ENCODE measurements at regions of chr13 and their contacts with region 1.

Region 1: GRCh38 chr13:76903544-76904162 is 17.4 kb upstream of the KCTD12 start:
- DNase-seq: peak; percentile 39
- H3K4me3 Mint-ChIP-seq: no peak overlapping the region
- H3K27ac Mint-ChIP-seq: no peak overlapping the region
- H3K4me1 Mint-ChIP-seq: no peaks in the 10 kb centered on the region
- H3K27me3 Mint-ChIP-seq: no peaks in the 10 kb centered on the region
- CTCF ChIP-seq: peak; percentile 41

Region 2: GRCh38 chr13:75687150-75687763 is 1216.4 kb before region 1 on chr13:
- CTCF ChIA-PET with region 1: no interaction called
- intact Hi-C with region 1: loop called (anchors 5 kb)
- DNase-seq: no peak
- H3K4me3 Mint-ChIP-seq: no peak overlapping the region
- H3K27ac Mint-ChIP-seq: no peak overlapping the region
- H3K4me1 Mint-ChIP-seq: peaks cover 11% of the 10 kb centered on the region
- H3K27me3 Mint-ChIP-seq: no peaks in the 10 kb centered on the region
- CTCF ChIP-seq: no peak

Region 3: GRCh38 chr13:75876360-75877050 is 1027.1 kb before region 1 on chr13:
- CTCF ChIA-PET with region 1: no interaction called
- intact Hi-C with region 1: loop called (anchors 5 kb)
- DNase-seq: peak; percentile 17
- H3K4me3 Mint-ChIP-seq: no peak overlapping the region
- H3K27ac Mint-ChIP-seq: no peak overlapping the region
- H3K4me1 Mint-ChIP-seq: peaks cover 7% of the 10 kb centered on the region
- H3K27me3 Mint-ChIP-seq: no peaks in the 10 kb centered on the region
- CTCF ChIP-seq: no peak

Region 4: DNA sequence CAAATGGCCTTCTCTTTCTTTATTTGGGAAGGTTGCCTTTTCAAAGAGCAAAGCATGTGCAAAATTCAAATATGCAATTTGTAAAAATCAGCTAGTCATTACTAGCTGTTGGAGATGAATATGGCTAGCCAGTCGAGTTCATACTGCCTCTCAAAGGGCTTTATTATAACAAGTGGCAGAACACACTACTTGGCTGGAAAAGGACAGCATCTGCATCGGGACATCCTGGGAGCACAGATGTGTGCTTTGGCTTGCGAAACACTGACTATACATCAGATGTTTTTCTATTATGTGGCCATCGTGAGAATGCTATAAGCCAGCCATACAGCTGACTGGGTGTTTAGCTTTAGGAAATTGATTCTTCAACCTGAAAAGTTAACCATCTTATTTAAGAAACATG is 441.7 kb before region 1 on chr13:
- CTCF ChIA-PET with region 1: no interaction called
- intact Hi-C with region 1: no loop called
- DNase-seq: no peak
- H3K4me3 Mint-ChIP-seq: no peak overlapping the region
- H3K27ac Mint-ChIP-seq: no peak overlapping the region
- H3K4me1 Mint-ChIP-seq: no peaks in the 10 kb centered on the region
- H3K27me3 Mint-ChIP-seq: no peaks in the 10 kb centered on the region
- CTCF ChIP-seq: no peak

Region 5: DNA sequence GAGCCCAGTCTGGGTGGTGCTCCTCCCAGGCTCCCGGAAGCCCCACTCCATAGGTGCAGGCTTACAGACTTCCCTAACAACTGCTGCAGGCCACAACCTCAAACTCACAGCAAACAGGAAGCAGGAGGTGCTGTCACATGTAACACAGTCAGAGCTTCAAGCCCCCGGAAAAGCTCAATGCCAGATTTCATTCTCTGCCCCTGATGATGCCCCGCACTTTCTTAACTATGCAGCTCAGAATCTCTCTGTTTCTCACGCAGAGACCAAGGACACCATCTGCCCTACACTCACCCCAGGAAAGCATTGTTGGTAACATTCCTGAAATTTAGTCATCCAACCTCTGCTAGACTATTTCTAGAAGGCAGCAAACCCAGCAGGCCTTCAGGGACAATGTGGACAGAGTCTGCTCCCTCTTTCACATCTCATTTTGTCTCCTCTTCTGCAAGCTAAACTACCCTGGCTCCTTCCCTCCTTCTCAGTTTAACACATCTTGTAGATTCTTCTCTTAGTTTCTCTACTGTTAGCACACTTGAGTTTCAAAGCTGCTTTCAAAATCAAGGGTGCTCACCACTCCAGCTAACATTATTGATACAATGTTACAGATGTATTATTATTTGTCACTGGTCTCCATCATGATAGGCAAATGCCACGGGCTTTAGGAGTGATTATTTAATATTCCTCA is 180.0 kb before region 1 on chr13:
- CTCF ChIA-PET with region 1: no interaction called
- intact Hi-C with region 1: no loop called
- DNase-seq: no peak
- H3K4me3 Mint-ChIP-seq: no peak overlapping the region
- H3K27ac Mint-ChIP-seq: no peak overlapping the region
- H3K4me1 Mint-ChIP-seq: no peaks in the 10 kb centered on the region
- H3K27me3 Mint-ChIP-seq: no peaks in the 10 kb centered on the region
- CTCF ChIP-seq: no peak

Region 6: DNA sequence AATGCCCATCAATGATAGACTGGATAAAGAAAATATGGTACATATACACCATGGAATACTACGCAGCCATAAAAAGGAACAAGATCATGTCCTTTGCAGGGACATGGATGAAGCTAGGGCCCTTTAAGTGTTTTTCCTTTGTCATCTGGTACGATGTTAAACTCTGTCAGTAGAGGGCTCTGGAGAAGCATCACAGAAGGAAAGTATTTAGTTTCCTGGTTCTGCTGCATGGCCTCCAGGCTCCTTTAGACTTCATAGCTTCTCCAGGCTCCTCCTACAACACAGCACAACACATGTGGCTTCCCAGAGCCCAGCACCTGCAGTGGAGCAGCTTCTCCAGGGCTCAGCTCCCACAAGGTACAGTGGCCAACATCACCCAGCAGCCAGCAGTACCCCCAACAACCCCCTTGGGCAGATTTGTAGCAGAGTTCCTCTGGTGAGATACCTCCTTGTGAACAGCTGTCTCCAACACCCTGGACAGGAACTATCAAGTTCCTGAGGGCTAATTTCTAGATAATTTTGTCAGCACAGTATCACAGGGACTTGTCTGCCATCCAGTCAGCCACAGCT is 80.9 kb before region 1 on chr13:
- CTCF ChIA-PET with region 1: no interaction called
- intact Hi-C with region 1: loop called (anchors 10 kb)
- DNase-seq: no peak
- H3K4me3 Mint-ChIP-seq: no peak overlapping the region
- H3K27ac Mint-ChIP-seq: no peak overlapping the region
- H3K4me1 Mint-ChIP-seq: no peaks in the 10 kb centered on the region
- H3K27me3 Mint-ChIP-seq: peaks cover 11% of the 10 kb centered on the region
- CTCF ChIP-seq: no peak

Region 7: DNA sequence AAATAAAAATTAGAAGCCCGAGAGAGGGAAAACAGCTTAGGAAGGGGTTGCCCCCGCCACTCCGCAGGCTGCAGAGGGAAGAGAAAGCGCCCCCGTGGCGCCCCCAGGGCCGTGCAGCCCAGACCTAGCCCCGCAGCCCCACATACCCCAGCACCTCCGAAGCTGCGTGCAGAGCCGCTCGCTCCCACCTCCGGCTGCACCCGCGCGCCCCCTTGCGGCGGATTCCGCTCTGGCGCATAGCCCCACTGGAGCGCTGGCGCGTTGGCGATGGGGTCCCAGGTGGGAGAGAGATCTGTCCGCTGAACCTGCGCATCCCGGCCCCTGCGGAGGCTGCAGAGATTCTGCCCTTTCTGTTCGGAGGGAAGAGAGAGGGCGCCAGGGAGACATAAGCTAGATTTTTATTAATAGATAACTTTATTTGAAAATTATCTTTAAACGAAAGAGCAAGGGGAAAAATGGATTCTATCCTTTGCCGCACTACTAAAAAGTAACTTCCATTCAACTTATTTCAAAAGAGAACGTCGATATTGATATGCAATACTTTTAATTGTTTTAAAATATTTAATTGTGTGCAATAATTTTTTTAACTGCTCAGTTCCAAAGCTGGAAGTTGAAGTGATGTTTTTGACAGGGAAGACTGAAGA is 76.5 kb after region 1 on chr13:
- CTCF ChIA-PET with region 1: no interaction called
- intact Hi-C with region 1: loop called (anchors 5 kb)
- DNase-seq: peak; percentile 74
- H3K4me3 Mint-ChIP-seq: no peak overlapping the region
- H3K27ac Mint-ChIP-seq: no peak overlapping the region
- H3K4me1 Mint-ChIP-seq: no peaks in the 10 kb centered on the region
- H3K27me3 Mint-ChIP-seq: no peaks in the 10 kb centered on the region
- CTCF ChIP-seq: peak; percentile 49

Region 8: DNA sequence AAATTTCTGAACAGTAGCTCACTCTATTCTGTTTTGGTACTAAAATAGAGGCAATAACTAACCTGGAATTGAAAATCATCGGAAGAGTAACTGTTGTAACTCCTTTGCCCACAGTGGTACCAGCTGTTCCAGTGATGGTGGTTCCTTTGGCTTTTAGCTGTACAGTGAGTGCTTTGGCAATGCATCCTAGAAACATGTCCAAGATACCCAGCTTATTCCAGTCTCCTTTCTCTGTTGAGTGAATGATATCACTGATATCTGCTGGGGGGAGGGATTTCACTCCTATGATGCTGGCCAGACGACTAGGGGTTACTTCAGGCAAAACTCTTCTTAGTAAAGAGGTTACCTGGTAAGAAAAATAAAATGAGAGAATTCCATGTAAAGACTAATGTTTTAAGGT is 163.9 kb after region 1 on chr13:
- CTCF ChIA-PET with region 1: no interaction called
- intact Hi-C with region 1: no loop called
- DNase-seq: no peak
- H3K4me3 Mint-ChIP-seq: no peak overlapping the region
- H3K27ac Mint-ChIP-seq: no peak overlapping the region
- H3K4me1 Mint-ChIP-seq: no peaks in the 10 kb centered on the region
- H3K27me3 Mint-ChIP-seq: no peaks in the 10 kb centered on the region
- CTCF ChIP-seq: no peak

Region 9: DNA sequence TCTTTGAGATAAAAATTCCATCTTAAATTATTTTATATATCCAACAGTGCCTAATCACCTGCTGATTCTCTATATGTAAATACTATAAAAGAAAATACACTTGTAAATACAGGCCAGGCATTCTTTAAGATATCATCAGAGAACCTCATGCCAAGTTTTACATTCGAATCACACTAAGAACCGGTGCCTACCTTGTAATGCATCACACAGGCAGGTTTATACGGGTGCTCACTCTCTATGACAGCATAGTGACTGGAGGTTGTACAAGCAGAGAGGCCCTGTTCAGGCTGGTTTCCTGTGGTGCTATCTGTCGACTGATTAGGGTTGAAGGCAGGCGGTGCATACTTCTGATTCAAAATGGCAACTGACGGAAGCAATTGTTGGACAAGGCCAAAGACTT is 264.6 kb after region 1 on chr13:
- CTCF ChIA-PET with region 1: no interaction called
- intact Hi-C with region 1: no loop called
- DNase-seq: no peak
- H3K4me3 Mint-ChIP-seq: no peak overlapping the region
- H3K27ac Mint-ChIP-seq: no peak overlapping the region
- H3K4me1 Mint-ChIP-seq: no peaks in the 10 kb centered on the region
- H3K27me3 Mint-ChIP-seq: no peaks in the 10 kb centered on the region
- CTCF ChIP-seq: no peak